Naive thymus-derived CD8-positive, alpha-beta T cell (primary cell): ENCODE measurements at regions of chr17 and their contacts with region 1.

Region 1: GRCh38 chr17:78313735-78314648 is 45.9 kb downstream of the SOCS3 start:
- DNase-seq: peak; percentile 58 to 84 (median 72)
- ATAC-seq: peak; percentile 82 to 84
- H3K4me3 Mint-ChIP-seq: peak overlapping the region; percentile 64 to 86 (median 78)
- H3K27ac Mint-ChIP-seq: peak overlapping the region in 9 of 10 donors; percentile 82 to 90 (median 88)
- H3K4me1 Mint-ChIP-seq: peaks cover 17 to 51% (median 40%) of the 10 kb centered on the region in 4 donors
- H3K27me3 Mint-ChIP-seq: peaks cover 0 to 3% (median 0%) of the 10 kb centered on the region in 5 donors

Region 2: DNA sequence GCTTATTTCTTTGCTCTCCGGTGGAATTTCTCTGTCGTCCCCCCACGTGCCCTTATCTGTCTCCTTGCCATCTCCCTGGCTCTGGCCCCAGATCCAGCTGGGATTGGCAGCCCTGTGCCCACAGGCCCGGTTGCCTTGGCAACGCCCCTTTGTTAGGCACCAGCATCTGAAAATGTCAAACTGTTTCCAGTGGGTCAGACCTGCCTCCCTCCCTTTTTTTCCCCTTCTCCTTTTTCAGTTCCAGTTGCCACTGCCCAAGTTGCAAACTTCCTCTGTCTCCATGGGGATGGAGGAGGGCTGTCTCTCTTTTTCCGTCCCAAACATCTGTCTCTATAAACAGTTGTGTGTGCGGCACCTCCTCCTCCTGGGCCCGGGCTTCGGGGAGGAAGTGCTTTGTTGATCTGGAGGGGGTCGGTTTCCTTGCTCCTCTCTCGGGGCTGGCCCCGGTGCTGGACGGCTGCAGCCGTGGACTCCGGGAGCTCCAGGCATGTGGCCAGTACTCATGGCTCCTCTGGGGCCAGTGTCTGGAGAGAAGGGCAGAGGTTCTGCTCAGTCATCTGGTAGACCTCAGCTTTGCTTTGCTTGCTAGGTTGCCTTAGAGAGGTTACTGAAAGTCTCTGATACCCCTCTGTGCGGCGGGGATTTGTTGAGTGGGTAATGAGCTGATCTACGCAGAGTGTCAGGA is 10.5 kb after region 1 on chr17:
- POLR2A ChIA-PET with region 1: interaction called, 14 read pairs
- DNase-seq: peak in 6 of 10 donors; percentile 17 to 44 (median 28)
- ATAC-seq: peak; percentile 81 to 83
- H3K4me3 Mint-ChIP-seq: peak overlapping the region; percentile 30 to 82 (median 72)
- H3K27ac Mint-ChIP-seq: peak overlapping the region; percentile 73 to 96 (median 90)
- H3K4me1 Mint-ChIP-seq: peaks cover 12 to 44% (median 25%) of the 10 kb centered on the region in 4 donors
- H3K27me3 Mint-ChIP-seq: no peaks in the 10 kb centered on the region

Region 3: GRCh38 chr17:78341559-78342448 is 27.8 kb after region 1 on chr17:
- POLR2A ChIA-PET with region 1: interaction called, 17 read pairs
- DNase-seq: peak in 3 of 10 donors; percentile 14 to 44 (median 36)
- ATAC-seq: peak in 1 of 2 donors; percentile 29
- H3K4me3 Mint-ChIP-seq: peak overlapping the region in 9 of 10 donors; percentile 24 to 87 (median 67)
- H3K27ac Mint-ChIP-seq: peak overlapping the region in 3 of 10 donors; percentile 65 to 99 (median 75)
- H3K4me1 Mint-ChIP-seq: peaks cover 23 to 82% (median 66%) of the 10 kb centered on the region in 4 donors
- H3K27me3 Mint-ChIP-seq: no peaks in the 10 kb centered on the region

Region 4: GRCh38 chr17:78360371-78361224 is 46.6 kb after region 1 on chr17:
- POLR2A ChIA-PET with region 1: interaction called, 20 read pairs
- DNase-seq: peak; percentile 66 to 92 (median 84)
- ATAC-seq: peak; percentile 15 to 29
- H3K4me3 Mint-ChIP-seq: peak overlapping the region; percentile 74 to 91 (median 86)
- H3K27ac Mint-ChIP-seq: peak overlapping the region; percentile 59 to 96 (median 94)
- H3K4me1 Mint-ChIP-seq: peaks cover 15 to 50% (median 43%) of the 10 kb centered on the region in 4 donors
- H3K27me3 Mint-ChIP-seq: no peaks in the 10 kb centered on the region